ENCODE measurements at regions of chr17 and their contacts with region 1.

Region 1: DNA sequence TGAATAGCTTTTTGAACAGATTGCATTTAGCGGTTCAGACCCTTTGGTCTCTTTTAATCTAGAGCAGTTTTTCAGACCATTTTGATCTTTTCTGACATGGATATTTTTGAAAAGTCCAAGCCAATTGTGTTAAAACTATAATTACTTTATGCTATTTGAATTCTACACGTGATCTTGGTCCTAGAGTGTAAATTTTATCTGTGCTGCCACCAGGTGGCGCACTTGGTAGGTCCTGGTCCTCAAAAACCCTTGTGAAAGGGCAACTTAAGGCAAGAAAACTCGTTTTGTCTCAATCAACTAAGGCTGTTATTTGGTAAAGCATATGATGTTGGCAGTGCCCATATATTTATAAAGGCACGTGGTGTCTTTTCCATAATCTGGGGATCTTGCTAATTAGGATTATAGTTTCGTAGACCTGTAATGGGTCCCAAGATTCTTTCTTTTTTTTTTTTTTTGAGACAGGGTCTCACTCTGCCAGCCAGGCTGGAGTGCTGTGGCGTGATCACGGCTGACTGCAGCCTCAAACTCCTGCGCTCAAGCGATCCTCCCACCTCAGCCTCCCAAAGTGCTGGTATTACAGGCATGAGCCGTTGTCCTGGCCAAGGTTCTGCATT is 43.9 kb upstream of the TEX2 start:
- DNase-seq: peak; percentile 72
- H3K4me3 ChIP-seq: peak overlapping the region in 1 of 2 experiments; percentile 13; a peak in 1 of 4 replicates
- H3K27ac ChIP-seq: no peak overlapping the region
- H3K4me1 ChIP-seq: no peaks in the 10 kb centered on the region
- H3K27me3 ChIP-seq: no peaks in the 10 kb centered on the region
- CTCF ChIP-seq: peak; percentile 99
- EP300 ChIP-seq: no peak
- RAD21 ChIP-seq: peak; percentile 71

Region 2: GRCh38 chr17:64291254-64291851 is 15.6 kb before region 1 on chr17:
- CTCF ChIA-PET with region 1: interaction called, 70 read pairs
- POLR2A ChIA-PET with region 1: no interaction called
- DNase-seq: no peak
- H3K4me3 ChIP-seq: no peak overlapping the region
- H3K27ac ChIP-seq: no peak overlapping the region
- H3K4me1 ChIP-seq: no peaks in the 10 kb centered on the region
- H3K27me3 ChIP-seq: no peaks in the 10 kb centered on the region
- CTCF ChIP-seq: peak; percentile 58
- EP300 ChIP-seq: no peak
- RAD21 ChIP-seq: peak; percentile 26

Measured in SK-N-SH (cell line).